Prostate gland (tissue), 2 donors: ENCODE measurements at regions of chr1 and their contacts with region 1.

Region 1: DNA sequence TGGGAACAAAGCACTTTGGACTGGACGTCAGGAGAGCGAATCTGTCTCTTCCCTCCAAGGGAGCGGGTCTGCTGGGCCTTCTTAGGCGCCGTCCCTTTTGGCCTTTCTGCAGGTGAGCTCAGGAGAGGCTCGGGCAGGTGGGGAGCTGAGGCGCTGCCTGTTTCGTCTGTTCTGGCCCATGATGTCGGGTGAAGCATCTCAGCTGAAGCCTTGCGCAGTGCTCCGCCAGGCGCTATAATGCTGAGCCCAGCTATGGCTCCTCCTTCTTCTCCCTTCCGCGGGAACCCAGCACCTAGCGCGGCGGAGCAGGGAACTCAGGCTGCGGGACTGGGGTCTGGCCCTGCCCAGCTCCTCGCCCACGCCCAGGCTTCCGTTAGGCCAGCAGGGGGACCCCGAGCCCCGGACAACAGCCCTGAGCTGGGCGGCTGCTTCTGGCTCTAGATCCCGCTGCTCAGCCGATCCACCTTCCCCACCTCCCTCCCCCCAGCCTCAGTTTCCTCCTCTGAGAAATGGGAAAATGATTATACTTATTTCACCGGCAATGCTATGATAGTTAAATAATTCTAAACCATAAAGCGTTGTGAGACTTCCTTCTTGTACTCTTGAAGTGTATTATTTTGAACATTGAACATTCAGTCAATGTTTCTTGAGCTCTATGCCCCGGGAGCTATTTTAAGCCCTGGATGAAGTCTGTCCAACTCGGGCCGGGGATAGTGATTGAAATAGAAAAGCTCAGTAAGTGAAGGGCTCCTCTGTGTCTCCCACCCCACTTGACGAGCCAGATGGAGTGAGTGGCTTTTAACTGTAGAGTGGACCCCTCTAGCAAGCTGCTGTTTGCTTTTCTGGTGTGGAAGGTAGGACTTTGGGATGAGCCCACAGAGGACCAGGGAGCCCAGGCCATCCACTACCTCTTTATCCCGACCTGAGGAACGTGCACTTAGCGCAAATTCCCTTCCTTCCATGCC is 9.6 kb upstream of the ADORA1 start:
- DNase-seq: peak; percentile 39
- H3K4me3 ChIP-seq: no peak overlapping the region
- H3K27ac ChIP-seq: no peak overlapping the region
- H3K4me1 ChIP-seq: no peaks in the 10 kb centered on the region
- H3K27me3 ChIP-seq: peaks cover 6% of the 10 kb centered on the region
- CTCF ChIP-seq: peak; percentile 15 to 79 (median 70)
- POLR2A ChIP-seq: no peak

Region 2: GRCh38 chr1:203172128-203173010 is 54.5 kb after region 1 on chr1:
- intact Hi-C with region 1: loop called (anchors 5 kb)
- DNase-seq: peak; percentile 25
- H3K4me3 ChIP-seq: no peak overlapping the region
- H3K27ac ChIP-seq: no peak overlapping the region
- H3K4me1 ChIP-seq: no peaks in the 10 kb centered on the region
- H3K27me3 ChIP-seq: no peaks in the 10 kb centered on the region
- CTCF ChIP-seq: peak; percentile 45 to 81 (median 62)
- POLR2A ChIP-seq: no peak

Region 3: GRCh38 chr1:203216274-203217138 is 98.6 kb after region 1 on chr1:
- intact Hi-C with region 1: loop called (anchors 2 kb)
- DNase-seq: peak; percentile 51
- H3K4me3 ChIP-seq: no peak overlapping the region
- H3K27ac ChIP-seq: no peak overlapping the region
- H3K4me1 ChIP-seq: no peaks in the 10 kb centered on the region
- H3K27me3 ChIP-seq: no peaks in the 10 kb centered on the region
- CTCF ChIP-seq: peak; percentile 34 to 81 (median 76)
- POLR2A ChIP-seq: no peak